Activated T-helper 2 cell treated with anti-CD3 and anti-CD28 coated beads, Interferon-gamma antibody, Interleukin-2, Interleukin-4, amounts not matched to agents 10 μg/mL and 5 μg/mL and 100 μg/mL, durations not matched to agents 14 hours and 24 hours and 36 hours (primary cell): ENCODE measurements at regions of chr2 and their contacts with region 1.

Region 1: DNA sequence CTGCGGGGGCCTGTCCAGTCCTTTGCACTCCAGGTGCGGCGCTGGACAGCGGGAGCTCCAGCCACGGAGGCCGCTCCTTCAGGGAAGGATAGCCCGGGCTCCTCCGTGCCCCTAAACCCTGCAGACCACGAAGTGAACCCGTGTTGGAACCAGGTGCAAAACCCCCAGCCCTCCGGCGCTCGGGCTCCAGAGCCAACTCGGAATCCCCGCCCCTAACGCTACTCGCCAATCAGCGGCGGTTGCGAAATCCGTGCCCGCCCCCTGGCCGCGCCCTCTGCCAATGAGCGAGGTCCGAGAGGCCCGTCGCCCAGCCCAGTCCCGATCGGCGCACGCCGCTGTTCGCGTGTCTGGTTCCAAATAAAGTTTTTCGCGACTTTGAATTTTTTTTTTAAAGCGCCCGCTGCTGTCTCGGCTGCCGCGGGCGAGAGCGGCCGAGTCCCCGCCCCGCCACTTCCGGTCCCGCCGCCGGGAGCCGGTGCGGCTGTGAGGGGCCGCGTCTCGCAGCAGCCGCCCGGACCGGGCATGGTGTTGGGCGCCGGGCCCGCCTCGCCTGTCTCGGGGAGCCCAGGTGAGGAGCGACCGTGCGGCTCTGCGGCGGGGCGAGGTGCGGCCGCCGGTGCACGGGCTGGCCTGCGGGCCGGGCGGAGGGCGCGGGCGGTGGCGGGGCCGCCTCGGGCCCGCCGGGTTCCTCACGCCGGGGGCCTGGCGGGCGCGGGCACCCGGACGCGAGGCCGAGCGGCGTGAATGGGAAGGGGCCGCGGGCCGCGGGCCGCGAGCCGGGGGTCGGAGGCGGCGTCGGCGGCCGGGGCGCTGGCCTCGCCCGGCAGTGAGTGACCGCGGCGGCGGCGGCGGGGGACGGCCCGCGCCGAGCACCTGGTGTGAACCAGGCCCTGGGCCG is at the start of gene UBE2F:
- DNase-seq: peak; percentile 97
- H3K4me3 Mint-ChIP-seq: peak within 1 kb of the TSS; percentile 89
- H3K27ac Mint-ChIP-seq: peak within 1 kb of the TSS; percentile 78
- H3K4me1 Mint-ChIP-seq: peaks cover 34% of the 10 kb centered on the region
- H3K27me3 Mint-ChIP-seq: no peaks in the 10 kb centered on the region
- total RNA-seq, gene UBE2F: 137 and 146 TPM in 2 replicates

Region 2: DNA sequence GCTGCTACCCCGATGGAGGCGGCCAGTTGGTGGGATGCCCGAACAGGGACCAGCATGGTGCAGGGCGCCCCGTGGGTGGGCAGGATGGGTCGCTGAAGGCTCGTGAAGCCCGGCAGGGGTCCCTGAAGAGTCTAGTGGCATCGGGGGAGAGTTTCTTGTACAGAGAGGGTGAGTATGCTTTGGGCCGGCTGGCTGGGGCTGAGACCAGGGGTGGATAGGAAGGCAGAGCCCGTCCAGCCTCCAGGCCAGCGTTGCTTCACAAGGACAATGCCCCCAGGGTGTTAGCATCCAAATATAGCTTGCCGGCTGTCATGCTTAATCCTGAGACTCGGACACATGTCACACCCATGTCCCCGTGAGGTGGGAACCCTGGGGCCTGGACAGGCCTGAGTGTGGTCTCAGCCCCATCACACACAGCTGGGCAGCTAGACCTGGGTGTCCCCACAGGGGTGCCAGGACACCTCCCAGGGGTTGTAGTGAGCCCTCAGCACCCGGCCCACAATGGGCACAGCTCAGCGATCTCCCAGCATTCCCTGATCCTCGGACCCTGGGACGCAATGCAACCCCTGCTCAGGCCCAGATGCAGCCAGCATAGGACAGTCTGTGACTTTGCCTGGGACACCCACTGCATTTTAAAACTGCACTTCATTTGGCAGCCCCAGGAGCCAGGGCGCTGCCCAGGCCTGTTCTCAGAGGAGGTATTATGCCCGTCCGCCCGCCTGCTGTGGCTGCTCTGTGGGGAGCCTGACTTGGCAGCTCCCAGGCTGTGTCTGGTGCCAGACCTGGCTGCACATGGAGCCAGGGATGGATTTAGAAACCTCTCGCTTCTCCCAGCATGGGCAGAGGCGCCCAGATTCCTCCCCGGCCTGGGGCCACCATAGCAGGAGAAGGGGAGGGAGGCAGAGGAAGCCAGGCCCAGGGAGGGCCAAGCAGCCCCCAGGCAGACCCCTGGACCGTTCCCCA is 71.0 kb before region 1 on chr2:
- intact Hi-C with region 1: loop called (anchors 2 kb)
- DNase-seq: no peak
- H3K4me3 Mint-ChIP-seq: no peak overlapping the region
- H3K27ac Mint-ChIP-seq: no peak overlapping the region
- H3K4me1 Mint-ChIP-seq: peaks cover 41% of the 10 kb centered on the region
- H3K27me3 Mint-ChIP-seq: no peaks in the 10 kb centered on the region

Region 3: GRCh38 chr2:237955640-237956401 is 11.0 kb before region 1 on chr2:
- intact Hi-C with region 1: no loop called
- DNase-seq: no peak
- H3K4me3 Mint-ChIP-seq: no peak overlapping the region
- H3K27ac Mint-ChIP-seq: no peak overlapping the region
- H3K4me1 Mint-ChIP-seq: peaks cover 11% of the 10 kb centered on the region
- H3K27me3 Mint-ChIP-seq: peaks cover 29% of the 10 kb centered on the region

Region 4: GRCh38 chr2:237998530-237998929 is 31.7 kb after region 1 on chr2:
- intact Hi-C with region 1: loop called (anchors 1 kb)
- DNase-seq: peak; percentile 25
- H3K4me3 Mint-ChIP-seq: peak overlapping the region; percentile 49
- H3K27ac Mint-ChIP-seq: peak overlapping the region; percentile 95
- H3K4me1 Mint-ChIP-seq: peaks cover 63% of the 10 kb centered on the region
- H3K27me3 Mint-ChIP-seq: no peaks in the 10 kb centered on the region

Region 5: DNA sequence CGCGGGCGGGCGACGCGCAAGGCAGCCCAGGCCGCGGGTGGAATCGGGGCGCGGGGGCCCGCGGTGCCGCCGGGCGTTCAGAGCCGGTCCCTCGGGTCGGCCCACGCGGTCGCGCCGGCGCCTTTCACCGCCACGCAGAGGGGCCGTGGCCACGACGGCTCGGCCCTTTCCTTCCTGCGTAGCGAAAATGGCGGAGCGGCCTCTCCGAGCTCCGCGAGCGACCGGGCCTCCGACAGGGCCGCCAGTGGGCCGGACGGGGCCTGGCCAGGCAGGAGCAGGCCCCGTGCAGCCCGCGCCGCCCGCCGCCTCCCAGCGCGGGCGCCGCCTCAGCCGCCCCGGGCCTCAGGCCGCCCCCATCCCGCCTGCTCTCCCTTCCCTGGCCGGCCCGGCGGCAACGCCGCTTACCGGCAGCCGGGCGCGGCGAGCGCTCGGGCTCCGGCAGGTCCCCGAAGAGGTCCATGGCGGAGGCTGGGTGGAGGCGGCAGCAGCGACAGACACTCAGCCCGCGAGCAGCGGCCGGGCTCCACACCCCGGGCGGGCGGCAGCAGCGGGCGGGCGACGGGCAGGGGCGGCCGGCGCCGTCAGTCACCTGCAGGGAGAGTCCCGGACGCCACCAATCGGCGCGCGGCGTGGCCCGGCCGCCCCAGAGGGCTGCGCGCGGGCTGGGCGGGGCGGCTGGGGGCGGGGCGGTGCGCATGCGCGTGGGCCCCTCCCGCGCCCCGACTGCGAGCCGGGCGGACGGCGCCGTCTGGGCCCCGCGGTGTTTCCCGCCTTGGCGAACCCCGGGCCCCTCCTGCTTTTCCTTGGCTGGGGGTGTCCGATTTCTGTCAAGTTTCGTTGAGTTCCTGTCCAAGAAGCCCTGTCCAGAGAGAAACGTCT is 236.5 kb after region 1 on chr2 and contains the start of gene ILKAP:
- intact Hi-C with region 1: loop called (anchors 2 kb)
- DNase-seq: peak; percentile 85
- H3K4me3 Mint-ChIP-seq: peak within 1 kb of the TSS; percentile 84
- H3K27ac Mint-ChIP-seq: peak within 1 kb of the TSS; percentile 81
- H3K4me1 Mint-ChIP-seq: peaks cover 26% of the 10 kb centered on the region
- H3K27me3 Mint-ChIP-seq: no peaks in the 10 kb centered on the region
- total RNA-seq, gene ILKAP: 67.1 and 71.3 TPM in 2 replicates